ENCODE measurements at regions of chr1 and their contacts with region 1.

Region 1: DNA sequence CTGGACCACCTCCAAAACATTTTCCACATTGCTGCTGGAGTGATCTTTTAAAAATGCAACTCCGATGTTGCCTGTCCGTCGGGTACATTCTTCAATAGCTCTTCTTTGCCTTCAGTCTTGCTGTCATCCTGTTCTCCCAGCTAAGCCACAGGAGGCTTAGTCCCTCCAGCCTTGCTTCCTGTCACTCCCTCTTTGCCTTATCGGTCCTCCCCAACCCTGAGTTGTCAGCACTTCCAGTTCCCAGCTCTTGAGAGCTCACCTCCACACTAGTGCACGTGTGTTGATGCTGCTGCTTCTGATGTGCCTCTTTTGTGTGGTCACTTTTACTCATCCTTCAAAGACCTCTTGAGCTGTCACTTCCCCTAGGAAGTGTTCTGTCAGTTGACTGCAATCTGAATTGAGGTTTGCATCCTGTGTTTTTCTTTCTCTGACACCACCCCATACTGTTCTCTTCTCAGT is 15.3 kb downstream of the UCK2 start:
- DNase-seq: no peak
- ATAC-seq: peak; percentile 40 to 70
- H3K4me3 ChIP-seq: no peak overlapping the region
- H3K27ac ChIP-seq: no peak overlapping the region
- H3K4me1 ChIP-seq: peaks cover 6% of the 10 kb centered on the region
- H3K27me3 ChIP-seq: no peaks in the 10 kb centered on the region

Region 2: DNA sequence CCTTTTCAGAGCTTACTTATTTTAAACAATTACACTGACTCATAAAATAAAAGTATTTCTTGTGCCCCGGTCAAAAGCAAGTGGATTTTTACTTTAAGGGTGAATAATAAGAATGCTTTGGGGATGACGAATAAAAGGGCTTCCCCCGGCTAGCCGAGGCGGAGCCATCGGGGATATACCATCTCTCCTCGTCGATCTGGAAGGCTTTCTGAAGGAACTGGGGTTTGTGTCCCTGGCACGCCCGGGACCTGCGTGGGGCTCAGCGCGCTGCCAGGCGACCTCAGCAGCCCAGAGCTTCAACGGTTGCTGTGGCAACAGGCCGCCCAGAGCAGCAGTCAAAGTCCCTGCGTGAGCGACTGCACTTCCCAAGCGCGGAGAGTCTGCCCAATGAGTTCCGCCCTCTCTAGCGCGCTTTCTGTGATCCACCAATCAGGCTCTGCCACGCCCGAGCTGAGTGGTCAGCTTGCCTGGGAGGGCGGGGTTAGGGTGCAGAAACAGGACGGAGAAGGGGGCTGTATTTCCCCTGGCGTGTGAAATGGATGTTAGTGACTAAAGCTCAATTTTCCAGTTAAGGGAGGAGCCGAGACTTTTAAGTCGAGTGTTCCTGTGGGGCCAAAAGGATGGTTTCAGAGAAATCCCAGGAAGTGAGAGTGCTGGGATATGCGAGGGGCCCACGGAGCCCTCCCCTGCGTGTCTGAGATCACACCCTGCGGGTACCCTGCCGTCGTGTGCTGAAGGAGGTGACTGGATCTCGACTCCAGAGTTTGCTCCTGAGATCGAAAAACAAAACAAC is 244.6 kb before region 1 on chr1:
- intact Hi-C with region 1: no loop called
- DNase-seq: peak; percentile 98 to 99 (median 98)
- ATAC-seq: peak; percentile 100
- H3K4me3 ChIP-seq: peak overlapping the region; percentile 33
- H3K27ac ChIP-seq: no peak overlapping the region
- H3K4me1 ChIP-seq: no peaks in the 10 kb centered on the region
- H3K27me3 ChIP-seq: no peaks in the 10 kb centered on the region

Region 3: DNA sequence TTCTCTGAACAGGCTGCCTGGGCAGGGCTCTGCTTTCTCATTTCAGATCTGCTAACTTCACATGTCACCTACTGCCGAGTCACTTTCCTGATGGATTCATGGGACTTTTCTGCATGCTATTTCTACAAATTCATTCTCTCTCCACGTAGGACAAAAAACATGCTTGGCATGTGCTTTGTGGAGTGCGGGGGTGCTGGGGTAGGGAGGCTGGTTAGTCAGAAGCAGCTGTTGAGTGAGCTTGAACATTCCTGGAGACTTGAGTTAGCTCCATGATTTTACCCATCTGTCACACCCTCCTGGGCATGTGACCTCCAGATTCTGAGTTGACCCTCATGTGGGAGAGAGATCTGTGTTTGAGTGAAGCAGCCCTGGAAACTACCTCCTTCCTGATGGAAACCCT is 56.1 kb after region 1 on chr1:
- intact Hi-C with region 1: loop called in 1 of 4 experiments (anchors 10 kb)
- DNase-seq: no peak
- ATAC-seq: peak in 1 of 2 donors; percentile 34
- H3K4me3 ChIP-seq: no peak overlapping the region
- H3K27ac ChIP-seq: peak overlapping the region; percentile 44
- H3K4me1 ChIP-seq: peaks cover 20% of the 10 kb centered on the region
- H3K27me3 ChIP-seq: no peaks in the 10 kb centered on the region

Region 4: GRCh38 chr1:165994107-165994506 is 151.4 kb after region 1 on chr1:
- intact Hi-C with region 1: no loop called
- DNase-seq: no peak
- ATAC-seq: no peak
- H3K4me3 ChIP-seq: no peak overlapping the region
- H3K27ac ChIP-seq: no peak overlapping the region
- H3K4me1 ChIP-seq: no peaks in the 10 kb centered on the region
- H3K27me3 ChIP-seq: no peaks in the 10 kb centered on the region